ENCODE measurements at regions of chr9 and their contacts with region 1.

Region 1: GRCh38 chr9:125407974-125408900 is 146.6 kb downstream of the GAPVD1 start:
- DNase-seq: peak in 1 of 2 experiments; percentile 81
- H3K4me3 ChIP-seq: peak overlapping the region; percentile 65
- H3K27ac ChIP-seq: no peak overlapping the region
- H3K4me1 ChIP-seq: no peaks in the 10 kb centered on the region
- H3K27me3 ChIP-seq: no peaks in the 10 kb centered on the region
- CTCF ChIP-seq: peak; percentile 88

Region 2: DNA sequence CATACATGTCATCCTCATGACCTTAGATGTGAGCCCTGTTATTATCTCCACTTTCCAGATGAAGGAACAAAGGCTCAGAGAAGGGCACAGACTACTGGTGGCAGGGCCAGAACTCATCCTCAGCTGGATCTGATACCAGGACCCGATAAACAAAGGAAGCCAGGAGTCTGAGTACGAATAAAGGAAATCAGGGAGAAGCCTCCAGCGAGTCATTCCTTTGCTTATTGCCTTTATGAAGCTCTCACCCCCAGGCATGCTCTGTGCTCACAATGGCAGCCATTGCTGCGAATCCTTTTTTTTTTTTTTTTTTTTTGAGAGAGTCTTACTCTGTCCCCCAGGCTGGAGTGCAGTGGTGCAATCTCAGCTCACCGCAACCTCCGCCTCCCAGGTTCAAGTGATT is 16.5 kb before region 1 on chr9:
- CTCF ChIA-PET with region 1: no interaction called
- POLR2A ChIA-PET with region 1: no interaction called
- intact Hi-C with region 1: no loop called
- DNase-seq: no peak
- H3K4me3 ChIP-seq: no peak overlapping the region
- H3K27ac ChIP-seq: no peak overlapping the region
- H3K4me1 ChIP-seq: no peaks in the 10 kb centered on the region
- H3K27me3 ChIP-seq: no peaks in the 10 kb centered on the region
- CTCF ChIP-seq: no peak

Region 3: GRCh38 chr9:125687163-125687863 is 279.1 kb after region 1 on chr9:
- CTCF ChIA-PET with region 1: interaction called, 14 read pairs
- POLR2A ChIA-PET with region 1: no interaction called
- intact Hi-C with region 1: no loop called
- DNase-seq: no peak
- H3K4me3 ChIP-seq: no peak overlapping the region
- H3K27ac ChIP-seq: no peak overlapping the region
- H3K4me1 ChIP-seq: no peaks in the 10 kb centered on the region
- H3K27me3 ChIP-seq: no peaks in the 10 kb centered on the region
- CTCF ChIP-seq: no peak

Region 4: GRCh38 chr9:126228781-126229444 is 820.7 kb after region 1 on chr9:
- CTCF ChIA-PET with region 1: no interaction called
- POLR2A ChIA-PET with region 1: no interaction called
- intact Hi-C with region 1: loop called (anchors 1 kb)
- DNase-seq: peak; percentile 44 to 70
- H3K4me3 ChIP-seq: no peak overlapping the region
- H3K27ac ChIP-seq: no peak overlapping the region
- H3K4me1 ChIP-seq: no peaks in the 10 kb centered on the region
- H3K27me3 ChIP-seq: peaks cover 85% of the 10 kb centered on the region
- CTCF ChIP-seq: peak; percentile 91

Region 5: GRCh38 chr9:126301985-126302603 is 893.9 kb after region 1 on chr9:
- CTCF ChIA-PET with region 1: no interaction called
- POLR2A ChIA-PET with region 1: no interaction called
- intact Hi-C with region 1: loop called (anchors 10 kb)
- DNase-seq: peak; percentile 40 to 51
- H3K4me3 ChIP-seq: no peak overlapping the region
- H3K27ac ChIP-seq: no peak overlapping the region
- H3K4me1 ChIP-seq: no peaks in the 10 kb centered on the region
- H3K27me3 ChIP-seq: no peaks in the 10 kb centered on the region
- CTCF ChIP-seq: peak; percentile 78

Region 6: DNA sequence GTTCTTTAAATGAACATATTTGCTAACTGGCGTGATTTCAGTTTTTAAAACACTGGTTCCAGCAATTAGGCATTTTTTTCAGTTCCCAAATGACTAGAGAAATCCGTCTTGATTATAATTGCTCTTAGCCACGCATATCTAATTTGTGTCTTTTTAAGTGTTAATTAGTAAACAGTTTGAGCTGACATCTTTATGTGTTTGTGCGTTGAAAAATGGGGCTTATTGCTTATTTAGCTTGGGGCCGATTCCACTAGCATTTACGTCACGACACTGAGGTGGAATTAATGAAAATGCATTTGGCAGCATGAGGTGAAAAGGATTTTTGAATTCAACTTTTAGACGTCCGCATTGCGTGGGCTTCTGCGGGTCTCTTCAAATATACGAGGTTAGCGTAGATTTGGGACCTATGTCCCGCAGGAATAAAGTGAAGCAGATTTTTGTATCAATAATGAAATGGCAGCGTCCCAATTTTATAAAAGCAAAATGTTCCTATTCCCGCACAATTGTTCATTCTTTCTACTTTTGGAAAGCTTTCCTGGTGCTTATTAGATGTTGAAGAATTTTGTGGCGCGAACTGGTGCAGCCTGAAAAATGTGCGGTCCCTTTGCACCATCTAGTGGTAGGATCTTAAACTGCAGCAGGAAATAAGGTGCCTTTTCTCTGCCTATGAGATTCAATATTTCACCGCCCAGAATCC is 1082.8 kb after region 1 on chr9:
- CTCF ChIA-PET with region 1: interaction called, 3 read pairs
- POLR2A ChIA-PET with region 1: no interaction called
- intact Hi-C with region 1: loop called (anchors 2 kb)
- DNase-seq: peak; percentile 50 to 53
- H3K4me3 ChIP-seq: no peak overlapping the region
- H3K27ac ChIP-seq: no peak overlapping the region
- H3K4me1 ChIP-seq: no peaks in the 10 kb centered on the region
- H3K27me3 ChIP-seq: no peaks in the 10 kb centered on the region
- CTCF ChIP-seq: peak; percentile 95

Measured in PC-9 (cell line).